CD4-positive, alpha-beta memory T cell (primary cell): ENCODE measurements at regions of chr2 and their contacts with region 1.

Region 1: DNA sequence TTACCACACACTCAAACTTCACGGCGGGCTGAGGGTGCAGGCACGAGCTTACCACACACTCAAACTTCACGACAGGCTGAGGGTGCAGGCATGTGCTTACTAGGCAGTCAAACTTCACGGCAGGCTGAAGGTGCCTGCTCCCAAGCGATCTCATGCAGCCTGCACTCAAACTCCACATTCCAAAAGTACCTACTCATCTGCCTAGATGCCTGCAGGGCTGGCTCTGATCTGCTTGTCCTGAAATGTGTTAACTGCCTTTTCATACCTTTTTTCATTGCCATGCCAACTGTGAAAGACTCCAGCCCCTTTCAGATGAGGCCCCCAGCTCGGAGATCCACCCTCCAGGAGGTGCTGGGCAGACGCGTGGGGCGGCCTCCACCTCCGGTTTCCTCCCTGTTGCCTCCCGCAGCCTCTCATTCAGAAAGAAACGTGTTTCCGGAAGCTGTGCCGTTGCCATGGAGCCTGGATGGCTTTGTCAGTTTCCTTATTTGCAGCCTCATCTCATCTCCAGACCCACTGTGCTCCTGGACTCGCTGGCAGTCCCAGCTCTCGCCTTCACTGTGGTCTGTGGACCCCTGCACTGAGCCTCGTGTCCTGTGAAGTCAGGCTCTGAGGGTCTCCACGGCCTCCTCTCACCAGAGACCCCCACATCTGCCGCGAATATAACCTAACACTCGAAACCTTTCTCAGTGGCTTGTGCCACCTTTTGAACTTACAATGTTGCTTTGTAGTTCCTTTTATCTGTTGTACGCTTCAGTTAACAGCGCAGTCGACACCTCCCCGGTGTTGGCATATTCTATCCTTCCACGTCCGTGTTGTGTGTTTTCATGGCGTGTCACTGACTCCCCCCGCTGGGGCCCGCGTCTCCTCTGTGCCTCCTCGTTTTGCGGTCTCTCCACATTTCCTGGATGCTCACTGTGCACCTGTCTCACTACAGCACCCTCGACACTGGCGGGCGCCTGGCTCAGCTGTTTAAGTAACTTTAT is 106.1 kb upstream of the ALKAL2 start:
- DNase-seq: peak; percentile 73 to 83 (median 76)
- H3K4me3 ChIP-seq: peak overlapping the region; percentile 38 to 41
- H3K4me3 Mint-ChIP-seq: peak overlapping the region; percentile 85 to 91 (median 88)
- H3K27ac ChIP-seq: peak overlapping the region; percentile 51
- H3K27ac Mint-ChIP-seq: peak overlapping the region; percentile 84 to 98 (median 97)
- H3K4me1 ChIP-seq: peaks cover 10% of the 10 kb centered on the region
- H3K4me1 Mint-ChIP-seq: peaks cover 12 to 26% (median 12%) of the 10 kb centered on the region in 4 donors
- H3K27me3 ChIP-seq: no peaks in the 10 kb centered on the region
- H3K27me3 Mint-ChIP-seq: no peaks in the 10 kb centered on the region

Region 2: GRCh38 chr2:437762-438393 is 43.9 kb after region 1 on chr2:
- CTCF ChIA-PET with region 1: no interaction called
- POLR2A ChIA-PET with region 1: interaction called, 20 read pairs
- intact Hi-C with region 1: loop called (anchors 1 kb)
- DNase-seq: peak; percentile 83 to 87 (median 86)
- H3K4me3 ChIP-seq: peak overlapping the region; percentile 30 to 33
- H3K4me3 Mint-ChIP-seq: peak overlapping the region; percentile 81 to 94 (median 86)
- H3K27ac ChIP-seq: peak overlapping the region; percentile 62
- H3K27ac Mint-ChIP-seq: peak overlapping the region; percentile 88 to 100 (median 98)
- H3K4me1 ChIP-seq: peaks cover 24% of the 10 kb centered on the region
- H3K4me1 Mint-ChIP-seq: peaks cover 15 to 32% (median 25%) of the 10 kb centered on the region in 4 donors
- H3K27me3 ChIP-seq: no peaks in the 10 kb centered on the region
- H3K27me3 Mint-ChIP-seq: no peaks in the 10 kb centered on the region

Region 3: GRCh38 chr2:460861-461260 is 66.9 kb after region 1 on chr2:
- CTCF ChIA-PET with region 1: no interaction called
- POLR2A ChIA-PET with region 1: no interaction called
- intact Hi-C with region 1: loop called (anchors 1 kb)
- DNase-seq: peak; percentile 74 to 85 (median 81)
- H3K4me3 ChIP-seq: no peak overlapping the region
- H3K4me3 Mint-ChIP-seq: peak overlapping the region; percentile 43 to 85 (median 74)
- H3K27ac ChIP-seq: no peak overlapping the region
- H3K27ac Mint-ChIP-seq: peak overlapping the region; percentile 8 to 92 (median 82)
- H3K4me1 ChIP-seq: peaks cover 23% of the 10 kb centered on the region
- H3K4me1 Mint-ChIP-seq: peaks cover 21 to 33% (median 25%) of the 10 kb centered on the region in 4 donors
- H3K27me3 ChIP-seq: no peaks in the 10 kb centered on the region
- H3K27me3 Mint-ChIP-seq: peaks cover 36 to 45% of the 10 kb centered on the region in 2 donors

Region 4: DNA sequence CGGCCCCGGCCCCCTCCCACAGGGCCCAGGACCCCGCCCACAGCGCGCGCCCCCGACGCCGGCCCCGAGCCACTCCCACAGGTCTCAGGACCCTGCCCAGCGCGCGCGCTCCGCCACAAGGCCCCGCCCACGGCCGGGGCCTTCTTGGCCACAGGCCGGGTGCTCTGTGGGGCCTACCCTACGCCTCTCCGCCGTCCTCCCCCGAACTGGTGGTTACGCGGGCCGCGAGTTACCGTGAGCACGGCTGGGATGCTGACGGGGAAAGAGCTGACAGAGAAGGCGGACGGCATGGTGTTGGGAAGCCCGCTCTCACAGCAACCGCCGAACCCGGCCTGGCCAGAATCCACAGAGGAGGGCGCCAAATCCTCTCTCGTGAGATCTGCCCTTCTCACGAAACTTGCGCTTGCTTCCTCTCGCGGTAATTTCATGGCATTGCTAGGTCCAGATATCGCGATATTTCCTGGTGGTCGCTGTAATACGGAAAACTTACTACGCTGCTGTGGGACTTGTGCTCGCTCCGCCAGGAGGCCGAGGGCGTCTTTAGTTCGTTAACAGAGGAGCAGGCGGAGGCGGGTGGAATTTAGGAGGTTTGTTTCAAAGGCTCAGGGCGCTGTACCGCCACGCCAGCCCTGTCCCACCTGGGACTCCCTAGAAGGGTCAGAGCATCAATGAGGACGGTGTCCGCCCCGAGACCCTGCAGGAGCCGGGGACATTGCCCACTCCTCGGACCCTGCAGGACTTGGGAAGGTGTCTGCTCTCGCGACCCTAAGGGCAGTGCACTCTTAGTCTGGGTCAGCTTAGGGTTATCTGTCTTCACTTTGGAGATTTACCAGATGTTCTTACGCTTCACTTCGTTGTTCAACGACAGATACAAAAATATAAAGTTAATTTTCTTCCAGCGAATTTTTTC is 283.3 kb after region 1 on chr2 and contains the start of gene TMEM18:
- CTCF ChIA-PET with region 1: no interaction called
- POLR2A ChIA-PET with region 1: interaction called, 5 read pairs
- intact Hi-C with region 1: loop called (anchors 1 kb)
- DNase-seq: peak; percentile 97 to 100 (median 99)
- H3K4me3 ChIP-seq: peak within 1 kb of the TSS; percentile 100
- H3K4me3 Mint-ChIP-seq: peak within 1 kb of the TSS; percentile 93 to 98 (median 97)
- H3K27ac ChIP-seq: peak within 1 kb of the TSS; percentile 97
- H3K27ac Mint-ChIP-seq: peak within 1 kb of the TSS; percentile 97 to 99 (median 99)
- H3K4me1 ChIP-seq: peaks cover 25% of the 10 kb centered on the region
- H3K4me1 Mint-ChIP-seq: peaks cover 29 to 45% (median 35%) of the 10 kb centered on the region in 4 donors
- H3K27me3 ChIP-seq: no peaks in the 10 kb centered on the region
- H3K27me3 Mint-ChIP-seq: no peaks in the 10 kb centered on the region
- total RNA-seq, gene TMEM18: 26.2 to 28.1 TPM